ENCODE measurements at regions of chr3 and their contacts with region 1.

Region 1: DNA sequence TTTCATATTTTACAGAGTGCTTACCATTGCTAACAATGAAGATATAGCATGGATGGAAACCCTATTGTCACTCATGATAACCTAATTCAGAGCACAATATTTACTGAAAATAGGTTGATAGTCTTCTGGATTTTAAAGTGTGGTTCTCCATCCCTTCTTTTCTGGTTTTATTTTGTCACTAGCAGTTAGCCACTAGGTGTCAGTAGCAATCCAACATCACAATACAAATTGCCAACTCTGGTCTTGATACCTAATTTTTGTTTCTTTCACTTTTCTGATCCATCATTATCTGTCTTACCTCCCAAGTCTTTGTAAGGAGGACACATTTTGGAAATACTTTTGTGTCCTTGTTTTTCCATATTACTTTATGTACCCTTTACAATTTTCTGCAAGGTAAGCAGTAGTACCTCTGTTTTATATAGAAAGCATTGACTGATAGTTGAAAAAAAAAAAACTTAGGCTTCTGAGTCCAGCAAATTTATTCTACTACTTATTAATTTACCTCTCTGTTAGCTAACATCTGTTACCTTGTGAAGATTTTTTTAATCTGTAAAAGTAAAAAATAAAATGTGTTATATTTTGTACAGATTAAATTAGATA is 28.3 kb upstream of the CRYBG3 start:
- DNase-seq: no peak
- H3K4me3 ChIP-seq: no peak overlapping the region
- H3K27ac ChIP-seq: no peak overlapping the region
- H3K4me1 ChIP-seq: no peaks in the 10 kb centered on the region
- H3K27me3 ChIP-seq: no peaks in the 10 kb centered on the region
- CTCF ChIP-seq: peak; percentile 61 to 78 (median 70)
- EP300 ChIP-seq: no peak
- POLR2A ChIP-seq: no peak

Region 2: DNA sequence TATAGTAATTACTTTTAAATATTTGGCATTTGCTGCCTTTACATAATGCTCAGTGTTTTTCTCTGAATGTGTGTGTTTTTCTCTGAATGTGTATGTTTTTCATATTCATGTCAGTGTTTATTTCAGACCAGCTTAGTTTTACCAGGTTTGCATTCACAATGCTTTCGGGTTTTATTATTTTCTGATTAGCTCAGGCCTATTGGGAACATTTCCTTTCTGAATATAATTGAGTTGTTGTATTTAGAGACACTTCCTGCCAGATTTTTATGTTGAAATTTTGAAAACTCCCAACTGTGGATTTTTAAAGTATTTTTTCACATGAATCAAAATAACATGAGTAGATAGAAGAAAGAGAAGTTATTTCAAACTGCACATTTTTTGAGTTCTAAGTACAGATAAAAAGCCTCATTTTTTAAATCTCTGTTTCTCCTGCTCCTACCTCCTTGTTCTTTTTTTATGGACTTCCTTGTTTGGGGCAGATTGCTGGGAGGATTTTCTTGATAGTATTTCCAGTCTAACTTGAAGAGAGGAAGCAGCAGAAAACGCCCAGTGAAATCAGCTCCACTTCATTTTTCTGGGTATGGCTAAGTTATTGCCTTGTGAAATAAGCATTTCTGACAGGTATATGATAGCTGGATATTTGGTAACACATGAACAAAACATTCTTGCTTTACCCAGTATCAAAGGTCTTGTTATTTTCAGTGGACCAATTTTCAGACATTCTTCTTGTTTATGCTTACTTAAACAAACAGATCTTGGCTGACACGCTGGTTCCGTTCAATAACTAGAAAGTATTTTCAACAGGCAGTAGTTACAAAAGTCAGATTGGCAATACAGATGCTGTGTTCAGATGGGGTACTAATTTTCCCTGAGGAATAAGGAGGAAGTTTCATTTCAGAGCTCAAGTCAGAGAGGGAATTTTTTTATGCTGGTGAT is 108.1 kb after region 1 on chr3:
- intact Hi-C with region 1: no loop called
- DNase-seq: no peak
- H3K4me3 ChIP-seq: no peak overlapping the region
- H3K27ac ChIP-seq: peak overlapping the region; percentile 31 to 54 (median 38)
- H3K4me1 ChIP-seq: no peaks in the 10 kb centered on the region
- H3K27me3 ChIP-seq: no peaks in the 10 kb centered on the region
- CTCF ChIP-seq: no peak
- EP300 ChIP-seq: no peak
- POLR2A ChIP-seq: no peak

Region 3: GRCh38 chr3:97940034-97940433 is 146.5 kb after region 1 on chr3:
- intact Hi-C with region 1: loop called (anchors 10 kb)
- DNase-seq: no peak
- H3K4me3 ChIP-seq: no peak overlapping the region
- H3K27ac ChIP-seq: no peak overlapping the region
- H3K4me1 ChIP-seq: no peaks in the 10 kb centered on the region
- H3K27me3 ChIP-seq: no peaks in the 10 kb centered on the region
- CTCF ChIP-seq: no peak
- EP300 ChIP-seq: no peak
- POLR2A ChIP-seq: no peak

Measured in sigmoid colon (tissue), 7 donors.